WTC11 (cell line): ENCODE measurements at regions of chr11 and their contacts with region 1.

Region 1: DNA sequence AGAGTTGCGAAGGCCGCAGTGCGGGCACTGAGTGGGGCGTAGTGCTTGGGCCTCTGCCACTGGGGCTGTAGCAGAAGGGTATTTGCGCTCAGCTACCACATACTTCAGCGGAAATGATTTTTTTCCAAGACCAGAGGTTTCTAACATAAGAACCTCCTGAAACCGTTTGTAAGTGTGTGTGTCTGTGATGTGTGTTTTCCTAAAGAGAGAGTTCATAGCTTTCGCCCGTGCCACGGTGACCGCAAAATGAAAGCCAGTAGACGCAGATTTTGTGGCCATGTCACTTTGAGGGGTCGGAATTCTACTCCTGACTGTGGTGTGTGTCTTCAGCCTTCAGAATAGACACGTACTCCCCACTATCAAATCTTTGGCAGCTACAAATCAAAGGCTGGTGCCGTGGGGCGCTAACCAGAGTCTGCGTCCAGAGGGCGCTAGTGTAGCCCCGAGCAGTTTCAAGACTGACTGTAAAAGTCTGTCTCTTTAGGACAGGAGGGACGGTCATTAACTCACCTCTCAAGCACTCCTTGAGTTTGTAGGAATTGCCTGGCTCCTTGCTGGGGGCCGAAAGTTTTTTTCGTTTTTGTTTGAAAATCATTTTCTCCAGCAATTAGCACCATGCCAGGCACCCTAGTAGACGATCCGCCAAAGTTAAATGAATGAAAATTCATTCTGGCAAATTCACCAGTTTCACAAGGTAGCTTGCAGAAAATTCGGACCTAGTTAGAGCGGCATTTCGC is 2.5 kb upstream of the CALCA start:
- DNase-seq: peak; percentile 85
- ATAC-seq: peak; percentile 67
- H3K4me3 Mint-ChIP-seq: peak overlapping the region; percentile 67
- H3K27ac Mint-ChIP-seq: no peak overlapping the region
- H3K4me1 Mint-ChIP-seq: peaks cover 59% of the 10 kb centered on the region
- H3K27me3 Mint-ChIP-seq: peaks cover 91% of the 10 kb centered on the region
- CTCF ChIP-seq: peak; percentile 72

Region 2: GRCh38 chr11:14619603-14620531 is 354.8 kb before region 1 on chr11:
- CTCF ChIA-PET with region 1: interaction called, 12 read pairs
- POLR2A ChIA-PET with region 1: no interaction called
- DNase-seq: no peak
- ATAC-seq: no peak
- H3K4me3 Mint-ChIP-seq: no peak overlapping the region
- H3K27ac Mint-ChIP-seq: no peak overlapping the region
- H3K4me1 Mint-ChIP-seq: no peaks in the 10 kb centered on the region
- H3K27me3 Mint-ChIP-seq: no peaks in the 10 kb centered on the region
- CTCF ChIP-seq: no peak

Region 3: DNA sequence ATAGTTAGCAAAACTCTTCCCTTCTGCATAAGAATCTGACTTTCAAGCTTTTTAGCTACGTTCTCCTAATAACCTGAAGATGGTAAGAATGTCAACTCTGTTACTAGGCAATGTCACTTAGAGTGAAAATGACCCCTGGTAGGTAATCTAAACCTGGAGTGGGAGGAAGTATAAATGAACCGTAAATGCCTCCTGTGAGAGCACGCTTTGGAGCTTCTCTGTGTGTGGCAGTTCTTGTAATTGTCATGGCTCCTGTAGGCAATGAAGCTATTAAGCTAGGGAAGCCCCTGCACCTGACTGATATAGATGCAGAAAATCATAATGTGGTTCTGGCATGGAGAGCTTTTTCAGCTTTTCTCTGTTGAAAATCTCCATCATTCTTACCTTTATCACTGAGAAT is 31.9 kb before region 1 on chr11:
- CTCF ChIA-PET with region 1: interaction called, 13 read pairs
- POLR2A ChIA-PET with region 1: interaction called, 9 read pairs
- DNase-seq: no peak
- ATAC-seq: no peak
- H3K4me3 Mint-ChIP-seq: no peak overlapping the region
- H3K27ac Mint-ChIP-seq: no peak overlapping the region
- H3K4me1 Mint-ChIP-seq: no peaks in the 10 kb centered on the region; the same call in 1 of the 2 replicates
- H3K27me3 Mint-ChIP-seq: no peaks in the 10 kb centered on the region
- CTCF ChIP-seq: no peak

Region 4: GRCh38 chr11:15038963-15039362 is 64.3 kb after region 1 on chr11:
- CTCF ChIA-PET with region 1: interaction called, 17 read pairs
- POLR2A ChIA-PET with region 1: interaction called, 4 read pairs
- DNase-seq: no peak
- ATAC-seq: no peak
- H3K4me3 Mint-ChIP-seq: no peak overlapping the region
- H3K27ac Mint-ChIP-seq: no peak overlapping the region
- H3K4me1 Mint-ChIP-seq: peaks cover 27% of the 10 kb centered on the region
- H3K27me3 Mint-ChIP-seq: no peaks in the 10 kb centered on the region
- CTCF ChIP-seq: no peak

Region 5: GRCh38 chr11:15101072-15101709 is 126.5 kb after region 1 on chr11:
- CTCF ChIA-PET with region 1: interaction called, 11 read pairs
- POLR2A ChIA-PET with region 1: no interaction called
- DNase-seq: peak; percentile 77
- ATAC-seq: peak; percentile 96
- H3K4me3 Mint-ChIP-seq: no peak overlapping the region
- H3K27ac Mint-ChIP-seq: no peak overlapping the region
- H3K4me1 Mint-ChIP-seq: no peaks in the 10 kb centered on the region
- H3K27me3 Mint-ChIP-seq: peaks cover 3% of the 10 kb centered on the region; the same call in 1 of the 2 replicates
- CTCF ChIP-seq: peak; percentile 71; the same call in 1 of the 2 replicates